Dorsolateral prefrontal cortex (tissue), 120 donors: ENCODE measurements at regions of chr7 and their contacts with region 1.

Region 1: GRCh38 chr7:35701287-35701900 is 6.5 kb upstream of the HERPUD2 start:
- DNase-seq: no peak
- H3K4me3 ChIP-seq: no peak overlapping the region
- H3K27ac ChIP-seq: no peak overlapping the region
- H3K27me3 ChIP-seq: no peaks in the 10 kb centered on the region
- CTCF ChIP-seq: no peak

Region 2: DNA sequence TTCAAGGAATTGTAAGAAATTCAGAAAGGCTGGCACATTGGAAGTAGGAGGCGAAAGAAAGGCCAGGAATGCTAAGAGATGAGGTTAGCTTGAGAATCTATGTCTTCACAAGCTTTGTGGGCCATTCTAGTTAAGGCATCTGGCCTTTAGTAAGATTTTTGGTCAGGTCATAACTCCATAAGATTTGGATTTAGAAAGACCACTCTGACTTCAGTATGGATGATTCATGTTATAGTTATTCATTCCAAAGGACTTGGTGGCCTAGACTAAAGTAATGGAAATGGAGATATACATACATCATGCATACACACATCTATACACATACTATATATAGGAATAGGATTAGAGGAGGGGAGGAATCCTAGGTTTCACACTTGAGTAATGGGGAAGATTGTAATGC is 177.0 kb after region 1 on chr7:
- intact Hi-C with region 1: no loop called
- DNase-seq: no peak
- H3K4me3 ChIP-seq: no peak overlapping the region
- H3K27ac ChIP-seq: peak overlapping the region in 5 of 59 donors; percentile 2 to 37 (median 22)
- H3K27me3 ChIP-seq: no peaks in the 10 kb centered on the region
- CTCF ChIP-seq: no peak

Region 3: DNA sequence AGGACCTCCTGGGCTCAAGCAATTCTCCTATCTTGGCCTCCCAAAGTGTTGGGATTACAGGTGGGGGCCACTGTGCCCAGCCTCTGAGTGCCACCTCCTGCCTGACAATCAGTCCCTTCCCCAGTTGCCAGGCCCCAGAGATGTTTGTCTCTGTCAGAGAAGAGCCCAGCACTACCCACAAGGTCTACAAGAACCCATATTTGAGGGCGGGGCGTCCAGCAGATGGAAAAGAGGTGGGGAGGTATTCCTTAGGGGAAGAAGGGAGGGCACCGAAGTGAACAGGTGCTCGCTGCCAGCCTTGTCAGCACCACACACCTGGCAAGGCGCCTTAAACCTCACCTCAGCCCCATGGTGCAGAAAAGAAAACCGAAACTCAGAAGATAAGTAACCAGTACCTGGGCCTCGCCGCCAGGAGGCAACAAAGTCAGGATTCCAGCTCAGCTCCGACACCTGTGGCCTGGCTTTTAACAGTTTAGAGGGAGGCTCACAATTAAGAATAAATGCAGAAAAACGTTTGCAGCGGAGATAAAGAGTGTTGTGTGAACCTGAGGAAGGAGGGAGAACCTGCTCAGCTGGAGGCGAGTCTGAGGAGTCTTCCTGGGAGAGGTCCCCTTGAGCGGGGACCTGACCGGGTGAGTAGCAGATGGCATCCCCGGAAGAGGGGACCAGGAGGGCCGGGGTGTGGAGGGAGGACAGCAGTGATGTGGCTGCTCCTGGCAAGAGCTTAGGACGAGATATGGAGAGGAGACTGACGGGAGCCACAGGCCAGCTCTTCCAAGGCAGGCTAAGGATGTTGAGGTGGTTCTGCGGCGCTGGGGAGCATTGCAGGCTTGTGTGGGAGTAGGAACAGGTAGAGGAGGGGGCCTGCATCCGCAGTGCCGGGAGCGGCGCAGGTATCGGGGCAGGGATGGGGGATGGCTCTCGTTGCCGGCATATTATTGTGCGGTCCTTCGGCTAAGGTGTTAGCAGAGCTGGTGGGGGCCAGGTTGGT is 611.2 kb after region 1 on chr7:
- intact Hi-C with region 1: loop called in 1 of 2 experiments (anchors 10 kb)
- DNase-seq: no peak
- H3K4me3 ChIP-seq: no peak overlapping the region
- H3K27ac ChIP-seq: no peak overlapping the region
- H3K27me3 ChIP-seq: no peaks in the 10 kb centered on the region
- CTCF ChIP-seq: no peak